GM12878 (cell line): ENCODE measurements at regions of chr9 and their contacts with region 1.

Region 1: DNA sequence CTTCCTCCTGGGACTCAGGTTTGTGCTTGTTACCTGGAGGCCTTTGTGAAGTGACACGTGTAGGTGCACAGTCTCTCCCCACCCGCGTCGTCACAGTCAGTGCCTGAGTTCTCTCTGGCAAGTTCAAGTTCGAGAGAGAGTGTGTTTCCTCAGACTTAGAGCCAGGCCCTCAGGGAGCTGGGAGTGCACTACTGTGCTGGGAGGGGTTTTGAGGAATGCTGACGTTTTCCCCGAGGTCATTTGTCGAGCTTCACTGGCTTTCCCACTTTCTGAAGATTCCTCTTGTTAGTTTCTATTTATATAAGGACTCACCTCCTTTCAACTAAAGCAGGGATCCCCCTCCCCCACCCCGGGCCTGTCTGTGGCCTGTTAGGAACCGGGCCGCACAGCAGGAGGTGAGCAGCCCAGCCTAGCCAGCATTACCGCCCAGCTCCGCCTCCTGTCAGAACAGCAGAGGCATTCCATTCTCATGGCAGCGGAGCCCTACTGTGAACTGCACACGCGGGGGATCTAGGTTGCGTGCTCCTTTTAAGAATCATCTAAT is 209.2 kb downstream of the DIRAS2 start:
- DNase-seq: no peak
- ATAC-seq: no peak
- H3K4me3 ChIP-seq: no peak overlapping the region
- H3K27ac ChIP-seq: no peak overlapping the region
- H3K4me1 ChIP-seq: no peaks in the 10 kb centered on the region
- H3K27me3 ChIP-seq: no peaks in the 10 kb centered on the region; a peak in 1 of 4 replicates
- CTCF ChIP-seq: no peak
- EP300 ChIP-seq: no peak
- POLR2A ChIP-seq: no peak
- RAD21 ChIP-seq: no peak

Region 2: DNA sequence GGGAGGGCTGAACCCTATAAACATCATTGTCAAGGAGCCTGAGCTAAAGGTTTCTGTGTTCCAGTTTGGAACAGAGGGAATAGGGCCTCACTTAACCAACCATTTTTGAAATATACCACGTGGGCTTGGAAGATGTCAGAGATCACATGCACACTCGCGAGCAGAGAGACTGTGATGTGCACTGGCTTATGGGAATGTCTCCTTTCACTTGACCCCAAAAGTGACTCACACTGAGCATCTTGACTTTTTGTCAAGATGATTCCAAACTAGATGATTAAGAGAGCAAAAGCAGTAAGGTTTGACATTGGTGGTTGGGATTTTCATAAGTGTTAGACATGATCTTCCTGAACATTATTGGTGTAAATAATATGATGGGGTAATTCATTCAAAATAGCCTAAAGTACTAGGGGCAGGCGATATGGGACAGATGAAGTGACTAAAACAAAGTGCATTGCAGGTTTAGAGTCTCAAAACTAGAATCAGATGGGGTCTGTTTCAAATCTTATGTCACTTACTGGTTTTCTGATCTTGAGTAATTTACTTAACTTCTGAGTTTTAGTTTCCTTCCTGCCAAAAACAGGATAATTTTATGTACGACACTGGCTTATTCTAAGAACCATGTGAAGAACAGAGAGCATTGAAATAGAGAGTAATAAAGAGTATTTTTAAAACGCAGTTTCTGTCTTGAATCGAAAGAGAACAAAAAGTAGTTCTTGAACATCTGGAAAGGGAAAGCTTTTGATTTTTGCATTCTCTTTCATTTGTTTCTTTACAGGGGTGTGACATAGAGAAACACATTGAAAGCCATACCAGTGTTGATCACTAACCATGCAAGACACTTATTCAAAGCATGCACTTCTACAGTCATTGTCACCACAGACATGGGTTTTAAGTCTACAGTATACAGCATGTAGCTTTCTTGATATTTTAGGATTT is 173.9 kb before region 1 on chr9:
- CTCF ChIA-PET with region 1: no interaction called
- POLR2A ChIA-PET with region 1: no interaction called
- RAD21 ChIA-PET with region 1: no interaction called
- SMC1A ChIA-PET with region 1: no interaction called
- in situ Hi-C with region 1: no loop called
- intact Hi-C with region 1: loop called (anchors 10 kb)
- DNase-seq: no peak
- ATAC-seq: no peak
- H3K4me3 ChIP-seq: no peak overlapping the region
- H3K27ac ChIP-seq: no peak overlapping the region
- H3K4me1 ChIP-seq: peaks cover 4% of the 10 kb centered on the region; the same call in 1 of the 2 replicates
- H3K27me3 ChIP-seq: no peaks in the 10 kb centered on the region; a peak in 1 of 4 replicates
- CTCF ChIP-seq: no peak
- EP300 ChIP-seq: no peak
- POLR2A ChIP-seq: no peak
- RAD21 ChIP-seq: no peak

Region 3: DNA sequence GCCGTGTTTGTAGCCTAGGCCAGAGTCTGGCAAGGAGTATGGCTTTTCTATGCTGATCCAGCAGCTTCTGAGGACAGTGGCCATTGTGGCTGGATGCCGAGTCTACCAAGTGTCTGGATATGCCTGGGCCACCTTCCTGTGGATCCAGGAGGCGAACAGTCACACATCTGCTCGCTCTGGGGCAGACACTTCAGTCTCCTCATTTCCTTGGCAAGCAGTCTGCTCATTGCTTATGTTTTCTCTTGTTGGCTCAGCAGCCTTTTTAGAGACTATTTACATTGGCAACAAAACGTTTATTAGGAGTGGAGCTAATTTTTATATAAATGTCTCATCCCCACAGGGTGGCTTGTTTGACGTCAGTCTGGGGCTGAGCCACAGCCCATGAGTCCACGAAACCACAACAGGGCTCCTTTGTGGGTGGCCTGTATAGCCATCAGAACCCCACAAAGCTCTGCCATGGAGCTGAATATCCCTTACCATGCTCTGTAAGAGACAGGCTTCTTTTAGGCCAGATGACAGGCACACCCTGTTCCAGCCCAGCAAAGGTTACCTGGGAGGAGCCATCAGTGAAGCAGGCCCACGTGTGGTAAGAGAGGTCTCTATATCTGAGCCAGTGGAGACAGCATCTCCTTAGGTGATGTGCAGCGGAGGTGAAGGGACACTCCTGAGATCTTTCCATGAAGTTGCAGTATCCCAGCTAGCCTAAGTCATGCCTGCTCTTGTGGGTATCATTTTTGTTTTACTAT is 12.5 kb before region 1 on chr9:
- CTCF ChIA-PET with region 1: no interaction called
- POLR2A ChIA-PET with region 1: no interaction called
- RAD21 ChIA-PET with region 1: no interaction called
- SMC1A ChIA-PET with region 1: no interaction called
- in situ Hi-C with region 1: no loop called
- intact Hi-C with region 1: no loop called
- DNase-seq: no peak
- ATAC-seq: no peak
- H3K4me3 ChIP-seq: no peak overlapping the region
- H3K27ac ChIP-seq: no peak overlapping the region
- H3K4me1 ChIP-seq: no peaks in the 10 kb centered on the region
- H3K27me3 ChIP-seq: no peaks in the 10 kb centered on the region
- CTCF ChIP-seq: no peak
- EP300 ChIP-seq: no peak
- POLR2A ChIP-seq: no peak
- RAD21 ChIP-seq: no peak

Region 4: GRCh38 chr9:90526386-90526785 is 92.9 kb after region 1 on chr9:
- CTCF ChIA-PET with region 1: no interaction called
- POLR2A ChIA-PET with region 1: no interaction called
- RAD21 ChIA-PET with region 1: no interaction called
- SMC1A ChIA-PET with region 1: no interaction called
- in situ Hi-C with region 1: no loop called
- intact Hi-C with region 1: loop called (anchors 5 kb)
- DNase-seq: no peak
- ATAC-seq: no peak
- H3K4me3 ChIP-seq: no peak overlapping the region
- H3K27ac ChIP-seq: no peak overlapping the region
- H3K4me1 ChIP-seq: no peaks in the 10 kb centered on the region
- H3K27me3 ChIP-seq: peaks cover 1 to 2% of the 10 kb centered on the region in 2 experiments; a peak in 2 of 4 replicates
- CTCF ChIP-seq: no peak
- EP300 ChIP-seq: no peak
- POLR2A ChIP-seq: no peak
- RAD21 ChIP-seq: no peak